Activated naive CD4-positive, alpha-beta T cell treated with anti-CD3 and anti-CD28 coated beads for 36 hours (primary cell): ENCODE measurements at regions of chr13 and their contacts with region 1.

Region 1: DNA sequence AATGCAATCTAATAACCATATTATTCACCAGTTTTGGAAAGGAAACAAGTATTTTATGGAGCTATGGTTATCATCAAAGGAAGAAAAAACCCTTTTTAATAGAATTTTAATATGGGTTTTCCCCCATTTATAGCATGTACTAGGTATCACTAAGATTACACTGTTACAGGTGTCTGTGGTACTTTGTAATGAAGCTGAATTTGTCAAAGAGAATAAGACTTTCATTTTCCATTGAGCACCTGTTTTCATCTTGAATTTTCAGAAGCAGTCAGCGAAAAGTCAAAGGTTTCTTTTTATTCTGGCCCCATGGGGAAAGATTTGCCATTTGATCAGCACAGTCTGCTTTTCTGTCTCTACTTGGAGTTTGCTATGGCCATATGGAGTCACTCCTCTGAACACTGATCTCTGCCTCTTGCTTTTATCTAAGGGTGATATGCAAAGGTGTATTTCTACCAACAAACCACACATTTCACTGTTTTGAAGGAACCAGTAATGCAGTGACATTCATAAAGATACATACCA is 590.0 kb downstream of the DCT start:
- DNase-seq: no peak
- H3K4me3 Mint-ChIP-seq: no peak overlapping the region
- H3K27ac Mint-ChIP-seq: no peak overlapping the region
- H3K4me1 Mint-ChIP-seq: peaks cover 4% of the 10 kb centered on the region
- H3K27me3 Mint-ChIP-seq: no peaks in the 10 kb centered on the region

Region 2: GRCh38 chr13:92781965-92782690 is 1107.4 kb before region 1 on chr13:
- CTCF ChIA-PET with region 1: no interaction called
- intact Hi-C with region 1: loop called (anchors 5 kb)
- DNase-seq: no peak
- H3K4me3 Mint-ChIP-seq: no peak overlapping the region
- H3K27ac Mint-ChIP-seq: no peak overlapping the region
- H3K4me1 Mint-ChIP-seq: no peaks in the 10 kb centered on the region
- H3K27me3 Mint-ChIP-seq: no peaks in the 10 kb centered on the region

Region 3: DNA sequence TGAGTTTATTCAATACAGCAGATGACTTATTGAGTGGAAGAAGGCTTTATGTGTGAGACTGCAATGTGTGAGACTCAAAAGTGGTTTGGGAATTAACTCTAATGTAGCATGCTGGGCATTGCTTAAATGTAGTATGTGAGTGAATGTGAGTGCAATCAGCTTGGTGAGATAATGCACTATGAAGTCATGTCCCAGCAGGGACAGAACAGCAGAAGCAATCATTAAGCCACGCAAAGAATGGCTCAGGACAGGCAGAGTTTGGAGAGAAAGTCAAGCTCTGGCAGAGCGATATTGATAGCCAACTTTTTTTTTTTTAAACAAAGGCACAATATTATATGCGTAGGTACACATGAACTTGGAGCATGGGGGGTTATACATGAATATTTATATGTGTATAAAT is 65.2 kb before region 1 on chr13:
- CTCF ChIA-PET with region 1: no interaction called
- intact Hi-C with region 1: no loop called
- DNase-seq: no peak
- H3K4me3 Mint-ChIP-seq: no peak overlapping the region
- H3K27ac Mint-ChIP-seq: no peak overlapping the region
- H3K4me1 Mint-ChIP-seq: no peaks in the 10 kb centered on the region
- H3K27me3 Mint-ChIP-seq: peaks cover 11% of the 10 kb centered on the region

Region 4: DNA sequence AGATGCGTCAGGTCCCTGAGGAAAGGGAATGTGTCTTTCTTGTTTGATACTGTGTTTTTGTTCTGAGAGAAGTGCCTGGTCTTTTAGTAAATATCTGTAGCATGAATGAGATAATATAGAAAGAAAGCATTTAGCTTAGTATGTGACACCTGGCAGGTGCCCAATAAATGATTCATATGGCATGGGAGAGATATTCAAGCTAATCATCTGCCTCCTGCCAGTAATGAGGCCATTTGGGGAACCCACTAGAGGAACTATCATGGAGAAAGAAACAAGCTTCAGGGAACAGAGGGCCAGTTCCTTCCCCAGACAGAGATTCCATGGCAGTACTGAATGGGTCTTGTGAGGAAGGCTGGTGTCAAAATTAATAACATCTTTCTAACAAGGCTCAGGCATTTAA is 13.9 kb before region 1 on chr13:
- CTCF ChIA-PET with region 1: no interaction called
- intact Hi-C with region 1: no loop called
- DNase-seq: no peak
- H3K4me3 Mint-ChIP-seq: no peak overlapping the region
- H3K27ac Mint-ChIP-seq: no peak overlapping the region
- H3K4me1 Mint-ChIP-seq: no peaks in the 10 kb centered on the region
- H3K27me3 Mint-ChIP-seq: peaks cover 6% of the 10 kb centered on the region

Region 5: DNA sequence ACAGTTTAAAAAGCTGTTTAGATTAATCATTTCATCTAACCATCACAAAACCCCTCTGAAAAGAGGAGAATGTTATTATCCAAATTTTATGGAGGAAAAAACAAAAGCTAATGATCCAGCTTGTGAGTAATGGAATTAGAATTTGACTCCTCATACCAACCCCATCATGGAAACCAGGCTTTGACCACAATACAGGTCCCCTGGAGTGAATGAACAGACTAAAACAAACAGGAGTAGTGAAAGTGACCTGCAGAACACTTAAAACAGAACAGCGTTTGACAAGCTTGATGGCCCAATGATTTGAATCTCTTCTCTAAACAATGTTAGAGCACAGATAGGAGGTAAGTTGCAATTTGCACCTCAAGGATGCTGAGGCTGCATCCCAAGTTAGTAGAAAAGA is 360.0 kb after region 1 on chr13:
- CTCF ChIA-PET with region 1: no interaction called
- intact Hi-C with region 1: no loop called
- DNase-seq: no peak
- H3K4me3 Mint-ChIP-seq: no peak overlapping the region
- H3K27ac Mint-ChIP-seq: no peak overlapping the region
- H3K4me1 Mint-ChIP-seq: peaks cover 9% of the 10 kb centered on the region
- H3K27me3 Mint-ChIP-seq: peaks cover 2% of the 10 kb centered on the region